Activated T-helper 1 cell treated with anti-CD3 and anti-CD28 coated beads, Interleukin-12 subunit alpha, Interleukin-12 subunit beta, Interleukin-2, Interleukin-4 antibody, amounts not matched to agents 30 ng/mL and 10 ng/mL and 1 ng/mL, durations not matched to agents 14 hours and 24 hours and 36 hours (primary cell): ENCODE measurements at regions of chr10 and their contacts with region 1.

Region 1: DNA sequence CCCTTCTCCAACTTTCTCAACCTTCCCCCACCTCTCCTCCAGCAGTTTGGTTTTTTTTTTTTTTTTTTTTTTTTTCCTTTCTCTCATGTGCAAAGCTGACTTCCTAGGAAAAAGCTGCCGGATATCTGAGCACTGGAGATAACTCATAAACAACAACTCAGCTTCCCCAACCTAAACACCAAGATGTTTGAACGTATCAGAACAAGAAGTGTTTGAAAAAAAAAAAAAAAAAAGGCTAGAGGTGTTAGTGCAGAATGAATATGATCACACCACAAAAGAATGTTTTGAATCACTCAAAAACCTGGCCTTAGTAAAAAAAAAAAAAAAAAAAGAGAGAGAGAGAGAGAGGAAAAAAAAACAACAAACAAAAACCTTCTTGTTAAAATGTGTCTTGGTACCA is 11.2 kb downstream of the GATA3 start:
- DNase-seq: no peak
- H3K4me3 Mint-ChIP-seq: peak overlapping the region; percentile 77
- H3K27ac Mint-ChIP-seq: peak overlapping the region; percentile 88
- H3K4me1 Mint-ChIP-seq: peaks cover 92% of the 10 kb centered on the region
- H3K27me3 Mint-ChIP-seq: peaks cover 2% of the 10 kb centered on the region

Region 2: GRCh38 chr10:7776777-7777176 is 288.9 kb before region 1 on chr10:
- intact Hi-C with region 1: no loop called
- DNase-seq: no peak
- H3K4me3 Mint-ChIP-seq: no peak overlapping the region
- H3K27ac Mint-ChIP-seq: no peak overlapping the region
- H3K4me1 Mint-ChIP-seq: peaks cover 4% of the 10 kb centered on the region
- H3K27me3 Mint-ChIP-seq: no peaks in the 10 kb centered on the region

Region 3: DNA sequence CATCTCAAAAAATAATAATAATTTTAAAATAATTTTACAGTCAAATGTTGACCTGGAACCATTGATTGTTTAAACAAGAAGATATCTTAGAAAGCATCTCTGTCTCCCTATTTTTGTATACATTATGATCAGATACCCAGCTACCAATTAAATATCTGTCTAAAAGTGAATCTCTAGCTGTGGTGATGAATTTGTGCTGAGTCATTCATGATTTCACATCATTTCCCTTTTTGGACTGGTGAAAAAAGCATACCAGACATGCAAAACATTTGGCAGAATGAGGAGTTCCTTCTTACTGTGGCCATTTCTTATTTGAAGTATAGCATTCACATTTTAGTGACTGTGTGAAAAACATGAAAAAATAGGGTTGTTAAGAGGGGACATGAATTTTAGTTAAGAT is 109.2 kb before region 1 on chr10:
- intact Hi-C with region 1: no loop called
- DNase-seq: no peak
- H3K4me3 Mint-ChIP-seq: no peak overlapping the region
- H3K27ac Mint-ChIP-seq: no peak overlapping the region
- H3K4me1 Mint-ChIP-seq: peaks cover 7% of the 10 kb centered on the region
- H3K27me3 Mint-ChIP-seq: peaks cover 2% of the 10 kb centered on the region

Region 4: GRCh38 chr10:8088504-8088903 is 22.9 kb after region 1 on chr10:
- intact Hi-C with region 1: loop called (anchors 1 kb)
- DNase-seq: peak; percentile 37
- H3K4me3 Mint-ChIP-seq: no peak overlapping the region
- H3K27ac Mint-ChIP-seq: peak overlapping the region; percentile 44
- H3K4me1 Mint-ChIP-seq: peaks cover 50% of the 10 kb centered on the region
- H3K27me3 Mint-ChIP-seq: no peaks in the 10 kb centered on the region

Region 5: DNA sequence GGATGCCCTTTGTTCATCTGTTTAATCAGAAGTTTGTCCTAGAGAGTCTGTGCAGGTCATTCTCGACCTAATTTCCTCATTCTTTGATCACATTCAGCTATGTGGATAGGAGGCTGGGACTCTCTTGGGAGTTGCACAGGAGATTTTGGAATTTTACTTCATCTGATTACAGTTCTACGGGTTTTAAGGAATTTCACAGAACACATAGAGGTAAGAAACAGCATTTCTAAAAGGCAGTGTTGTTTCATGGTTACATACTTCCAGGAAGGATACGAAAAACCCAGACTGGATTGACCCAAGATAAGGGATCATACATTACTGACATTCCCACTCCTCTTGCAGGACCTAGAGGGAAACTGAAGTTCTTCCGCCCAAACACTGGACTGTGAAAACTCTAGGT is 34.7 kb after region 1 on chr10:
- intact Hi-C with region 1: no loop called
- DNase-seq: no peak
- H3K4me3 Mint-ChIP-seq: no peak overlapping the region
- H3K27ac Mint-ChIP-seq: no peak overlapping the region
- H3K4me1 Mint-ChIP-seq: peaks cover 22% of the 10 kb centered on the region
- H3K27me3 Mint-ChIP-seq: peaks cover 5% of the 10 kb centered on the region

Region 6: DNA sequence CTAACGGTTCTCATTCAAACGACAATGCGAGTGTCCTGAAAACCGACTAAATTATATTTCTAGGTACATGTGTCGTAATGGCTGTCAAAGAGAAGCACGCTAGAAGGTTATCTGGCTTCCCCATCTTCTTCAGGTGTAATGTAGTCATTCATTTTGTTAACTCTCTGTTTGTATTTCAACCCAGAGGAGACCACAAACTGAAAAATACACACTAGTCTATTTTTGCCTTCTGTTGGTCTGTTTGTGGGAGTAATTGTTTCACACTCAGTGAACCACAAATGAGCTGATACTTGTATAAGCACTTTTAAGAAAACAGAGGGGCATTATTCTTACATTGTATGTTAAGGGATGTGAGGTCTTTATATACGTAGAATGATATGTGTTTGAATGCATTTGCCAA is 294.7 kb after region 1 on chr10:
- intact Hi-C with region 1: loop called (anchors 1 kb)
- DNase-seq: no peak
- H3K4me3 Mint-ChIP-seq: peak overlapping the region; percentile 32
- H3K27ac Mint-ChIP-seq: peak overlapping the region; percentile 78
- H3K4me1 Mint-ChIP-seq: peaks cover 56% of the 10 kb centered on the region
- H3K27me3 Mint-ChIP-seq: peaks cover 9% of the 10 kb centered on the region

Region 7: DNA sequence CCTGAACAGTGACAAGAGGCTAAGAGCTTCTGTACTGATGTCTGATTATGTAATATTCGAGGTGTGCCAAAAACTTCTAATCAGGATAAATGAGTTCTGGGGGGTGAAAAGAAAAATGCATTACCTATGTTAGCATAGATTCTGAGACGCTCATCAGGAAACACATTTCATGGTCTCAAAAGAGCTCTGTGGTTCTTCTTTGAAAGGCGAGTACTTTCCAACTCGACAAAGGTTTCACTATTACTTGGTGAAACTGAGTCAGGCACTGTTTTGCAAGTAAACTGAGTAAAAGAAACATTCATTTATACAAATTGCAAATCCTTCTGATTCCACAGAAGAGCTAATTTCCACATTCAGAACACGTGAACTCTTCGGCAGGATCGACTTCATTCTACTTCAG is 512.0 kb after region 1 on chr10:
- intact Hi-C with region 1: loop called (anchors 5 kb)
- DNase-seq: no peak
- H3K4me3 Mint-ChIP-seq: peak overlapping the region; percentile 27
- H3K27ac Mint-ChIP-seq: peak overlapping the region; percentile 64
- H3K4me1 Mint-ChIP-seq: peaks cover 40% of the 10 kb centered on the region
- H3K27me3 Mint-ChIP-seq: peaks cover 3% of the 10 kb centered on the region